ENCODE measurements at regions of chr6 and their contacts with region 1.

Region 1: GRCh38 chr6:155327326-155328073 is 13.2 kb upstream of the TFB1M start:
- DNase-seq: peak; percentile 53 to 58 (median 58)
- H3K4me3 ChIP-seq: no peak overlapping the region
- H3K4me3 Mint-ChIP-seq: no peak overlapping the region
- H3K27ac ChIP-seq: no peak overlapping the region
- H3K27ac Mint-ChIP-seq: peak overlapping the region in 4 of 7 donors; percentile 0 to 33 (median 29)
- H3K4me1 ChIP-seq: no peaks in the 10 kb centered on the region
- H3K4me1 Mint-ChIP-seq: peaks cover 2% of the 10 kb centered on the region
- H3K27me3 ChIP-seq: no peaks in the 10 kb centered on the region
- H3K27me3 Mint-ChIP-seq: peaks cover 0 to 5% (median 0%) of the 10 kb centered on the region in 3 donors
- CTCF ChIP-seq: peak; percentile 86

Region 2: DNA sequence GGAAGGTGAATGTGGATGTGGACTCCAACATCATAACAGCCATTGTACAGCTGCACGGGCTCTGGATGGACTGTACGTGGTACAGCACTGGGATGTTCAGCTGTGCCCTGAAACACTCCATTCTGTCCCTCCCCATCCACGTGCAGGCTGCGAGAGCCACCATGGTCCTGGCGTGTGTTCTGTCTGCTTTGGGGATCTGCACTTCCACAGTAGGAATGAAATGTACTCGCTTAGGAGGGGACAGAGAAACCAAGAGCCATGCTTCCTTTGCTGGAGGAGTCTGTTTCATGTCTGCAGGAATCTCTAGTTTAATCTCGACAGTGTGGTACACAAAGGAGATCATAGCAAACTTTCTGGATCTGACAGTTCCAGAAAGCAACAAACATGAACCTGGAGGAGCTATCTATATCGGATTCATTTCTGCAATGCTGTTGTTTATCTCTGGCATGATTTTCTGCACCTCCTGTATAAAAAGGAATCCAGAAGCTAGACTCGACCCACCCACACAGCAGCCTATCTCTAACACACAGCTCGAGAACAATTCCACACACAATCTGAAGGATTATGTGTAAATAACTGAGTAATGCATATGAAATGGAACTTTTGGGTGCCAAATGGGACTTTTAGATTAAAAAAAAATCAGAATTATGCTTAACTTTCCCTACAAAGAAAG is 51.6 kb before region 1 on chr6:
- intact Hi-C with region 1: no loop called
- DNase-seq: no peak
- H3K4me3 ChIP-seq: no peak overlapping the region
- H3K4me3 Mint-ChIP-seq: no peak overlapping the region
- H3K27ac ChIP-seq: no peak overlapping the region
- H3K27ac Mint-ChIP-seq: peak overlapping the region in 2 of 7 donors; percentile 5 to 10
- H3K4me1 ChIP-seq: no peaks in the 10 kb centered on the region
- H3K4me1 Mint-ChIP-seq: no peaks in the 10 kb centered on the region
- H3K27me3 ChIP-seq: no peaks in the 10 kb centered on the region
- H3K27me3 Mint-ChIP-seq: no peaks in the 10 kb centered on the region
- CTCF ChIP-seq: no peak

Region 3: DNA sequence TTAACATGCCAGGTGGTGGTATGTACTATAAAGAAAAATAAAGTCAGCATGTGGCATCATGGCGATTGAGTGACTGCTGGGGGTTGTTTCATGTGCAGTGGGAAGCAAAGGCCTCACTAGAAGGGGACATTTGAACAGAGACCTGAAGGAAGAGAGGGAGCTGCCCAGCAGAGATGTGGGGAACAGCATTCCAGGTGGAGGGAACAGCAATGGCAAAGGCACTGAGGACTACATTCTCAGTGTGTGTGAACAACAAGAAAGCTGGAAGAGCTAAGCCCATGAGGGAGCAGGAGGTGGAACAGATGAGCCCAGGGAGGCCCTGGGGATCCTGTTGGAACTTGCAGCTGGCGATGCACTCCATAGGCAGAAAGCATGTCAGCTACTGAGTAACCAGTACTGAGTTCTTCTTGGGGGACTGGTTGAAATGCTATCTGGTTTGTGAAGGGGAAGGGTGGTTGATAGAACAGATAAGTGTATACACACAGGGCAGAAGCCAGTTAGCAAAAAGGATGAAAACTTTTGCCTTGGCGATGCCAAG is 99.0 kb after region 1 on chr6:
- intact Hi-C with region 1: loop called in 1 of 2 experiments (anchors 10 kb)
- DNase-seq: no peak
- H3K4me3 ChIP-seq: no peak overlapping the region
- H3K4me3 Mint-ChIP-seq: no peak overlapping the region
- H3K27ac ChIP-seq: no peak overlapping the region
- H3K27ac Mint-ChIP-seq: no peak overlapping the region
- H3K4me1 ChIP-seq: no peaks in the 10 kb centered on the region
- H3K4me1 Mint-ChIP-seq: no peaks in the 10 kb centered on the region
- H3K27me3 ChIP-seq: no peaks in the 10 kb centered on the region
- H3K27me3 Mint-ChIP-seq: peaks cover 0 to 1% (median 0%) of the 10 kb centered on the region in 3 donors
- CTCF ChIP-seq: no peak

Region 4: GRCh38 chr6:155510879-155511278 is 183.4 kb after region 1 on chr6:
- intact Hi-C with region 1: no loop called
- DNase-seq: peak in 1 of 3 donors; percentile 6
- H3K4me3 ChIP-seq: no peak overlapping the region
- H3K4me3 Mint-ChIP-seq: no peak overlapping the region
- H3K27ac ChIP-seq: no peak overlapping the region
- H3K27ac Mint-ChIP-seq: no peak overlapping the region
- H3K4me1 ChIP-seq: no peaks in the 10 kb centered on the region
- H3K4me1 Mint-ChIP-seq: no peaks in the 10 kb centered on the region
- H3K27me3 ChIP-seq: no peaks in the 10 kb centered on the region
- H3K27me3 Mint-ChIP-seq: peaks cover 0 to 4% (median 0%) of the 10 kb centered on the region in 3 donors
- CTCF ChIP-seq: no peak